GM12878 (cell line): ENCODE measurements at regions of chr3 and their contacts with region 1.

Region 1: GRCh38 chr3:172595641-172596393 is 72.6 kb upstream of the TNFSF10 start:
- DNase-seq: peak; percentile 60
- ATAC-seq: peak; percentile 48
- H3K4me3 ChIP-seq: peak overlapping the region; percentile 37; the same call in 1 of the 2 replicates
- H3K27ac ChIP-seq: peak overlapping the region; percentile 62
- H3K4me1 ChIP-seq: peaks cover 29% of the 10 kb centered on the region
- H3K27me3 ChIP-seq: no peaks in the 10 kb centered on the region
- CTCF ChIP-seq: peak; percentile 83 to 91 (median 87)
- EP300 ChIP-seq: no peak
- POLR2A ChIP-seq: no peak
- RAD21 ChIP-seq: peak; percentile 96

Region 2: GRCh38 chr3:172332256-172333041 is 263.4 kb before region 1 on chr3:
- CTCF ChIA-PET with region 1: interaction called, 25 read pairs
- POLR2A ChIA-PET with region 1: no interaction called
- RAD21 ChIA-PET with region 1: interaction called, 9 read pairs
- SMC1A ChIA-PET with region 1: interaction called, 4 read pairs
- in situ Hi-C with region 1: no loop called
- intact Hi-C with region 1: no loop called
- DNase-seq: no peak
- ATAC-seq: peak; percentile 97
- H3K4me3 ChIP-seq: no peak overlapping the region
- H3K27ac ChIP-seq: no peak overlapping the region
- H3K4me1 ChIP-seq: no peaks in the 10 kb centered on the region
- H3K27me3 ChIP-seq: no peaks in the 10 kb centered on the region
- CTCF ChIP-seq: peak; percentile 81 to 90 (median 88)
- EP300 ChIP-seq: no peak
- POLR2A ChIP-seq: no peak
- RAD21 ChIP-seq: peak; percentile 63

Region 3: GRCh38 chr3:172476347-172476746 is 119.5 kb before region 1 on chr3:
- CTCF ChIA-PET with region 1: interaction called, 39 read pairs
- POLR2A ChIA-PET with region 1: interaction called, 3 read pairs
- RAD21 ChIA-PET with region 1: interaction called, 8 read pairs
- SMC1A ChIA-PET with region 1: interaction called, 21 read pairs
- in situ Hi-C with region 1: loop called (anchors 5 kb)
- intact Hi-C with region 1: no loop called
- DNase-seq: no peak
- ATAC-seq: no peak
- H3K4me3 ChIP-seq: no peak overlapping the region
- H3K27ac ChIP-seq: no peak overlapping the region
- H3K4me1 ChIP-seq: peaks cover 9% of the 10 kb centered on the region; the same call in 1 of the 2 replicates
- H3K27me3 ChIP-seq: no peaks in the 10 kb centered on the region
- CTCF ChIP-seq: no peak
- EP300 ChIP-seq: no peak
- POLR2A ChIP-seq: no peak
- RAD21 ChIP-seq: no peak

Region 4: GRCh38 chr3:172522871-172523818 is 72.7 kb before region 1 on chr3 and contains the start of gene TNFSF10:
- CTCF ChIA-PET with region 1: interaction called, 20 read pairs
- POLR2A ChIA-PET with region 1: interaction called, 3 read pairs
- RAD21 ChIA-PET with region 1: interaction called, 24 read pairs
- SMC1A ChIA-PET with region 1: interaction called, 13 read pairs
- in situ Hi-C with region 1: no loop called
- intact Hi-C with region 1: loop called (anchors 1 kb)
- DNase-seq: peak; percentile 76
- ATAC-seq: peak; percentile 92
- H3K4me3 ChIP-seq: peak within 1 kb of the TSS; percentile 57
- H3K27ac ChIP-seq: peak within 1 kb of the TSS; percentile 74
- H3K4me1 ChIP-seq: peaks cover 10% of the 10 kb centered on the region; the same call in 1 of the 2 replicates
- H3K27me3 ChIP-seq: no peaks in the 10 kb centered on the region
- CTCF ChIP-seq: no peak
- EP300 ChIP-seq: no peak
- POLR2A ChIP-seq: peak; percentile 89
- RAD21 ChIP-seq: no peak
- polyA plus RNA-seq, gene TNFSF10: 4.1 to 4.6 TPM

Region 5: DNA sequence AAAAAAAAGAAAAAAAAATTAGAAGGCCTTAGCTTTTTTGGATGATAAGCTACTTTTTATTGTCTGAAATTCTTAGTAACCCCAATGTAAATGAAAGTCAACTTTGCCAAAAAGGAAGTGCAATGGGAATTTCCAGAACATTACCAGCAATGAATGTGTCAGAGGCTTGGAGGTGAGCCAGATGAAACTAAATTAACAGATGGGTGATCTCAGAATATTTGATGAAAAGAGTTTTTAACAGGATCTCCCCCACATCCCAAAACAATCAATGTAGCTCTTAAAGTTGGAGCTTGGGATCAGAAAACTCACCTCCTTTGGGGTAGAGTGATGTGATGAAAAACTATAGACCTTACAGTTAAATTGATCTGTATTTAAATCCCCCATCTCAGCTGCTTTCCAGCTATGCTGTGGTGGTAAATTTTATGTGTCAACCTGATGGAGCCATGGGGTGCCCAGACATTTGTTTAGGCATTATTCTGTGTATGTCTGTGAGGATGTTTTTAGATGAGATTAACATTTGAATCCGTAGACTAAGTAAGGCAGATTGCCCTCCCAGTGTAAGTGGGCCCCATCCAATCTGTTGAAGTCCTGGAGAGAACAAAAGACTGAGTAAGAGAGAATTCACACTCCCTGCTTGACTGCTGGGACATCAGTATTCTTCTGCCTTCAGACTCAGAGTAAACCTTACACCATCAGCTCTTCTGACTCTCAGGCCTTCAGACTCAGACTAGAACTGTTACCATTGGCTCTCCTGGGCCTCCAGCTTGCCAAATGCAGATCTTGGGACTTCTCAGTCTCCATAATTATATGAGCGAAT is 11.7 kb after region 1 on chr3:
- CTCF ChIA-PET with region 1: interaction called, 42 read pairs
- POLR2A ChIA-PET with region 1: interaction called, 6 read pairs
- RAD21 ChIA-PET with region 1: interaction called, 33 read pairs
- SMC1A ChIA-PET with region 1: interaction called, 18 read pairs
- in situ Hi-C with region 1: no loop called
- intact Hi-C with region 1: no loop called
- DNase-seq: no peak
- ATAC-seq: peak; percentile 76
- H3K4me3 ChIP-seq: no peak overlapping the region
- H3K27ac ChIP-seq: no peak overlapping the region; the same call in 1 of the 2 replicates
- H3K4me1 ChIP-seq: no peaks in the 10 kb centered on the region
- H3K27me3 ChIP-seq: no peaks in the 10 kb centered on the region
- CTCF ChIP-seq: no peak
- EP300 ChIP-seq: no peak
- POLR2A ChIP-seq: no peak
- RAD21 ChIP-seq: no peak

Region 6: DNA sequence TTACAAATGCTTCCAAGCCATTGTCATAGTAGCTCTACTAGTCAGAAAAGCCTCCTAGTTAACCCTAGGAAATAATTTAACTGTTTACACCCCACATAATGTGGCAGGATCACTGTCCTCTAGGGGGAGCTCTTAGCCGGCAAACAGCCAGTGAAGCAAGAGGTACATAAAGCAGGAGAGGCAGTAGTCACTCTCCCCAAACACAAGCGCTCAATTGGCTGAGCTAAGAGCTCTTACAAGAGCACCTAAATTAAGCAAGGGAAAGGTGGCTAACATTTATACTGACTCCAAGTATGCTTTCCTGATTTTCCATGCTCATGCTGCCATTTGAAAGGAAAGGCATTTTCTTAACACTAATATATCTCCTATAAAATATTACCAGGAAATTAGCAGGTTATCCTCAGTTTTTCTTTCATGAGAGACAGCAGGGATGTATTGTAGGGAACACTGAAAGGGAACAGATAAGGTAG is 77.4 kb after region 1 on chr3:
- CTCF ChIA-PET with region 1: interaction called, 25 read pairs
- POLR2A ChIA-PET with region 1: no interaction called
- RAD21 ChIA-PET with region 1: interaction called, 7 read pairs
- SMC1A ChIA-PET with region 1: interaction called, 13 read pairs
- in situ Hi-C with region 1: no loop called
- intact Hi-C with region 1: no loop called
- DNase-seq: no peak
- ATAC-seq: peak; percentile 97
- H3K4me3 ChIP-seq: no peak overlapping the region
- H3K27ac ChIP-seq: no peak overlapping the region
- H3K4me1 ChIP-seq: no peaks in the 10 kb centered on the region
- H3K27me3 ChIP-seq: no peaks in the 10 kb centered on the region
- CTCF ChIP-seq: peak; percentile 64 to 76 (median 67)
- EP300 ChIP-seq: no peak
- POLR2A ChIP-seq: no peak
- RAD21 ChIP-seq: peak; percentile 65